ENCODE measurements at regions of chr5 and their contacts with region 1.

Region 1: GRCh38 chr5:125685771-125686170 is 737.4 kb upstream of the GRAMD2B start:
- DNase-seq: no peak
- ATAC-seq: no peak
- H3K4me3 ChIP-seq: no peak overlapping the region
- H3K27ac ChIP-seq: no peak overlapping the region
- H3K4me1 ChIP-seq: no peaks in the 10 kb centered on the region
- H3K27me3 ChIP-seq: no peaks in the 10 kb centered on the region
- CTCF ChIP-seq: no peak
- EP300 ChIP-seq: no peak
- POLR2A ChIP-seq: no peak
- RAD21 ChIP-seq: no peak

Region 2: DNA sequence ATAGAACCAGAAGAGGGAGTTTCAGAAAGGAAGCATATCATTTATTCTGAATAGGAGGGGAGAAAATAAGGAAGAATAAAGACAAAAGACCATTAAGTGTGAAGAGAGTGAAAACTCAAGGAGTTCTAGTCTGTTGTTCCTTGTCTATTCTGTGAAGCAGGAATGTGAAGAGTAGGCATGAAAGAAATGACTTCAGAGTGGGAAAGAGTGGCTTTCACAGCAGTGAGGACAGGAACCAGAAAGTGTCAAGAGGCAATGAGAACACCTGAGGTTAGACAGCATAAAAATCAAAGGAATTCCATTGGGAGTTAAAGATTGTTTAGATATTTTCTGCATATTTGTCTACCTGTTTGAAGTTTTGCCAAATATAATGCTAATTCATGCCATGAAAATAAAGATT is 31.4 kb before region 1 on chr5:
- CTCF ChIA-PET with region 1: no interaction called
- POLR2A ChIA-PET with region 1: no interaction called
- in situ Hi-C with region 1: no loop called
- intact Hi-C with region 1: loop called (anchors 1 kb)
- DNase-seq: no peak
- ATAC-seq: no peak
- H3K4me3 ChIP-seq: no peak overlapping the region
- H3K27ac ChIP-seq: no peak overlapping the region
- H3K4me1 ChIP-seq: no peaks in the 10 kb centered on the region
- H3K27me3 ChIP-seq: no peaks in the 10 kb centered on the region
- CTCF ChIP-seq: no peak
- EP300 ChIP-seq: no peak
- POLR2A ChIP-seq: no peak
- RAD21 ChIP-seq: no peak

Region 3: GRCh38 chr5:125719681-125720347 is 34.0 kb after region 1 on chr5:
- CTCF ChIA-PET with region 1: no interaction called
- POLR2A ChIA-PET with region 1: no interaction called
- in situ Hi-C with region 1: no loop called
- intact Hi-C with region 1: no loop called
- DNase-seq: no peak
- ATAC-seq: no peak
- H3K4me3 ChIP-seq: no peak overlapping the region
- H3K27ac ChIP-seq: no peak overlapping the region
- H3K4me1 ChIP-seq: no peaks in the 10 kb centered on the region
- H3K27me3 ChIP-seq: no peaks in the 10 kb centered on the region
- CTCF ChIP-seq: no peak
- EP300 ChIP-seq: no peak
- POLR2A ChIP-seq: no peak
- RAD21 ChIP-seq: no peak